HCT116 (cell line): ENCODE measurements at regions of chr12 and their contacts with region 1.

Region 1: DNA sequence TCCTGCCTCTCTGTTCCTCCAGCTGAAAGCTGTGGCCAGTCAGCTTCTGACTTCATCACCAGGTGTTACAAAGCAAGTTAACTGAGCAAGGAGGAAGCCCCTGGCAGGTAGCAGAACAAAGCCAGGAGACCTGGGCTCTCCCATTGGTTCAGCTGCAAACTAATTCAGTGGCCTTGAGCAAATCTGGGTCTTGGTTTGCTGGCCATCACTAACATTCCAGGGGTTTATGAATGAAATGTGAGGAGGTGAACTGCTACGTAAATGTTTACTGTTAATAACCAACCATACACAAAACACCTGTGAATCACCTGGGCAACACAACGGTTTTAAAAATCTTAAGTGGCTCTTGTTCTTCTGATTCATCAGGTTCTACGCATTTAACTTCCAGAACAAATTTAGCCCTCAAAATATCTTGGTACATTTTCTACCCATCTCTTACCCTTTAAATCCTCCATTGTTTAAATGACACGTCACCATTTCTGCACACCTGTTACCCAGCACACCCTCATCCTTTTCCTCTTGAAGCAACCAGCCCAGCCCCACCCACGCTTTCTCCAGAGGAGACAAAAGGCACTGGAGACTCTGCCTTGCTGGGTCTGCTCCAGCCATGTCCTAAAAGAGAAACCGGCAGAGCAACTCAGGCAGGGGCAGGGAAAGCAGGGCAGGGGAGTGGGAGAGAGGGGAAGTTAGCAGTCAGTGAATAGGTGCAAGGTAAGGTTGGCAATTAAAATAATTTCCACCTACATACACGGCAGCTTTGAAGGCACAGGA is 49.3 kb upstream of the TSPAN11 start:
- DNase-seq: no peak
- ATAC-seq: no peak
- H3K4me3 ChIP-seq: no peak overlapping the region
- H3K27ac ChIP-seq: no peak overlapping the region
- H3K4me1 ChIP-seq: peaks cover 0 to 3% of the 10 kb centered on the region in 2 experiments; a peak in 1 of 4 replicates
- H3K27me3 ChIP-seq: peaks cover 31% of the 10 kb centered on the region
- CTCF ChIP-seq: no peak
- POLR2A ChIP-seq: no peak
- RAD21 ChIP-seq: no peak

Region 2: GRCh38 chr12:30896461-30896860 is 19.2 kb after region 1 on chr12:
- CTCF ChIA-PET with region 1: no interaction called
- POLR2A ChIA-PET with region 1: no interaction called
- RAD21 ChIA-PET with region 1: no interaction called
- intact Hi-C with region 1: loop called (anchors 1 kb)
- DNase-seq: no peak
- ATAC-seq: no peak
- H3K4me3 ChIP-seq: no peak overlapping the region
- H3K27ac ChIP-seq: no peak overlapping the region
- H3K4me1 ChIP-seq: no peaks in the 10 kb centered on the region
- H3K27me3 ChIP-seq: no peaks in the 10 kb centered on the region
- CTCF ChIP-seq: no peak
- POLR2A ChIP-seq: no peak
- RAD21 ChIP-seq: no peak